Transverse colon (tissue), 4 donors: ENCODE measurements at regions of chr5 and their contacts with region 1.

Region 1: GRCh38 chr5:31218978-31219377 is 25.5 kb downstream of the CDH6 start:
- DNase-seq: peak; percentile 24
- H3K4me3 ChIP-seq: no peak overlapping the region
- H3K27ac ChIP-seq: no peak overlapping the region
- H3K4me1 ChIP-seq: peaks cover 0 to 10% (median 2%) of the 10 kb centered on the region in 4 donors
- H3K27me3 ChIP-seq: no peaks in the 10 kb centered on the region
- CTCF ChIP-seq: peak in 1 of 5 experiments; percentile 27
- EP300 ChIP-seq: no peak
- POLR2A ChIP-seq: no peak

Region 2: GRCh38 chr5:31291323-31291852 is 72.4 kb after region 1 on chr5:
- in situ Hi-C with region 1: no loop called
- intact Hi-C with region 1: loop called (anchors 2 kb)
- DNase-seq: no peak
- H3K4me3 ChIP-seq: no peak overlapping the region
- H3K27ac ChIP-seq: no peak overlapping the region
- H3K4me1 ChIP-seq: no peaks in the 10 kb centered on the region
- H3K27me3 ChIP-seq: no peaks in the 10 kb centered on the region
- CTCF ChIP-seq: no peak
- EP300 ChIP-seq: no peak
- POLR2A ChIP-seq: no peak

Region 3: GRCh38 chr5:31626156-31626555 is 407.2 kb after region 1 on chr5:
- in situ Hi-C with region 1: no loop called
- intact Hi-C with region 1: no loop called
- DNase-seq: no peak
- H3K4me3 ChIP-seq: no peak overlapping the region
- H3K27ac ChIP-seq: no peak overlapping the region
- H3K4me1 ChIP-seq: no peaks in the 10 kb centered on the region
- H3K27me3 ChIP-seq: no peaks in the 10 kb centered on the region
- CTCF ChIP-seq: no peak
- EP300 ChIP-seq: no peak
- POLR2A ChIP-seq: no peak

Region 4: DNA sequence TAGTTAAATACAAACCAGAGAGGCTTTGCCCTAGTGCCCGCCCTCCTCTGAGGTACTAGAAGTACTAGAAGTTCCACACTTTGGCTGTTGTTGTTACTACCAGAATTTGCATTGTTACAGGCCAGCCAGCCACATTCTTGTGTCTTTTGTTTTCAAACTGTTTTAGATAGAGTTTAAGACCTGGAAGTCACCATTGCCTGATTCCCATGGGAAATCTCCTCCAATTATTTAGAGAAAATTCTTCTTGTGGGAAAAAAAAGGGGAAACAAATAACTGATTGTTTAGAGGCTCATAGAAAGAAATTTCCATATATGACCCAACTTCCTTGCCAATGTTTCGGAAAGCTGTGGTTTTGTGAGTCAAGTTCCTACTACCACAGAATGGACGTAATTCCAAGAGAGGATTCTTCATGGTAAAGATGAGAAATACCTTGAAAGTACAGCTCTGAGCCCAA is 702.9 kb after region 1 on chr5:
- in situ Hi-C with region 1: no loop called
- intact Hi-C with region 1: no loop called
- DNase-seq: no peak
- H3K4me3 ChIP-seq: no peak overlapping the region
- H3K27ac ChIP-seq: no peak overlapping the region
- H3K4me1 ChIP-seq: no peaks in the 10 kb centered on the region
- H3K27me3 ChIP-seq: no peaks in the 10 kb centered on the region
- CTCF ChIP-seq: no peak
- EP300 ChIP-seq: no peak
- POLR2A ChIP-seq: no peak

Region 5: GRCh38 chr5:32928761-32929160 is 1709.8 kb after region 1 on chr5:
- in situ Hi-C with region 1: no loop called
- intact Hi-C with region 1: no loop called
- DNase-seq: no peak
- H3K4me3 ChIP-seq: no peak overlapping the region
- H3K27ac ChIP-seq: no peak overlapping the region
- H3K4me1 ChIP-seq: no peaks in the 10 kb centered on the region
- H3K27me3 ChIP-seq: no peaks in the 10 kb centered on the region
- CTCF ChIP-seq: no peak
- EP300 ChIP-seq: no peak
- POLR2A ChIP-seq: no peak